Caco-2 (cell line): ENCODE measurements at regions of chr2 and their contacts with region 1.

Region 1: DNA sequence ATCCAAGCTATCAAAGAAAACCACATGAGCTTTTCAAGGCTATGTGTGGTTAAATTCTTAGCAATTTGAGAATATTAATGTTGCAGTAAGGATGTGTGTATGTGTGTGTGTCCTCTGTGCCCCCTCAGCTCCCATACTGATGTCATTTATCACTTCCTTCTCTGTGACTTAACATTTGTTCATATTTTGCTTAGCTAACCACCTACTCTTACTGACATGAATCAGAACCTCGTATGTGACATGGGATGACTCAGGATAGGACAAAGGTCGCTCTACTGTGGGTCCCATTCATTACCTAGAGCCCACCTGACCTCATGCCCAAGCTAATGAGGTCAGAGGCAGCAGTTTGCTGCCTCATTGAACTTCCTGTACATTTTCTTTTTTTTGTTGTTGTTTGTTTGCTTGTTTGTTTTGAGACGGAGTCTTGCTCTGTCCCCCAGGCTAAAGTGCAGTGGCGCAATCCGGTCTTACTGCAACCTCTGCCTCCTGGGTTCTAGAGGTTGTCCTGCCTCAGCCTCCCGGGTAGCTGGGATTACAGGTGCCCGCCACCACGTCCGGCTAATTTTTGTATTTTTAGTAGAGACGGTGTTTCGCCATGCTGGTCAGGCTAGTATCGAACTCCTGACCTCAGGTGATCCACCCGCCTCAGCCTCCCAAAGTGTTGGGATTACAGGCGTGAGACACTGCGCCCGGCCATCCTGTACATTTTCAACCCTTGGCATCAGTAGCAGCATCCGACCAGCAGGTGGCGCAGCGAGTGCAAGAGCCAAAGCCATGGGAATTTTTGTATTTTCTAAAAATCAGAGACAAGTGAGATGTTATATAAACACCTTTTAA is 36.4 kb downstream of the MOGAT1 start:
- DNase-seq: peak; percentile 84 to 90
- H3K4me3 ChIP-seq: no peak overlapping the region
- H3K4me3 Mint-ChIP-seq: peak overlapping the region; percentile 40
- H3K27ac Mint-ChIP-seq: peak overlapping the region; percentile 21
- H3K4me1 ChIP-seq: peaks cover 16% of the 10 kb centered on the region
- H3K4me1 Mint-ChIP-seq: peaks cover 17% of the 10 kb centered on the region
- H3K27me3 ChIP-seq: no peaks in the 10 kb centered on the region
- H3K27me3 Mint-ChIP-seq: no peaks in the 10 kb centered on the region
- CTCF ChIP-seq: peak; percentile 98 to 99

Region 2: DNA sequence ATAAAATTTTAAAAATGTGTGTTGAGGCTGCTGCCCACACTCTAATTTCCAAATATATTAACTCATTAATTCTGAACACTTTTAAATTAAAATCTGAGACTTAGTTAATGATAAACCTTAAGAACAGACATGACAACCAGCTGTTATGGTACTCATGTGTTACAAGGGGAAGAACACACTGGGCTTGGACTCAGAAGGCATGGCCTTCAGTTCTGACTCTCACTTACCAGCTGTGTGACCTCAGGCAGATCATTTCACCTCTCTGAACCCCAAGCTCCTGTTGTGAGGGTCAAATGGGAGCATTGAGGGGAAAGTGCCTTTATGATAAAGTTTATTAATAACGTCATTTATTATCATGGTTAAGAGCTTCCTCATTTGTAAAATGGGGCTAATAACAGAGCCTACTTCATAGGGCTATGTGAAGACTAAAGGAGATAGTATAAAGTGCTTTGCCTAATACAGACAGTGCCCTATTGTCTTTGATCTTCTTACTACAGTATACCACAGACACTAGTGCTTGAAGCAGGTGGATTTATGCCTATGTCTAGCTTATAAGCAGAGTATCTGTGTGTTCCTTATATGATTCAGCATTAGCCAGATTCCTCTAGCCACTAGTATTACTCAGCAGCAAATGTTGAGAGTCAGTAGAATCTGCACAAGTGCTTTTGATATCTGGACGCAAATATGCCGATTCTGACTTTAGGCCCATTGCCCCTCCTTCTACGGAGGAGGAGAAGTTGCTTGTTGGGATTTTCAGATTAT is 183.9 kb before region 1 on chr2:
- CTCF ChIA-PET with region 1: no interaction called
- POLR2A ChIA-PET with region 1: no interaction called
- intact Hi-C with region 1: no loop called
- DNase-seq: no peak
- H3K4me3 ChIP-seq: no peak overlapping the region
- H3K4me3 Mint-ChIP-seq: no peak overlapping the region
- H3K27ac Mint-ChIP-seq: no peak overlapping the region
- H3K4me1 ChIP-seq: no peaks in the 10 kb centered on the region
- H3K4me1 Mint-ChIP-seq: no peaks in the 10 kb centered on the region
- H3K27me3 ChIP-seq: no peaks in the 10 kb centered on the region
- H3K27me3 Mint-ChIP-seq: no peaks in the 10 kb centered on the region
- CTCF ChIP-seq: no peak

Region 3: GRCh38 chr2:222677981-222678380 is 29.9 kb before region 1 on chr2:
- CTCF ChIA-PET with region 1: no interaction called
- POLR2A ChIA-PET with region 1: no interaction called
- intact Hi-C with region 1: no loop called
- DNase-seq: no peak
- H3K4me3 ChIP-seq: no peak overlapping the region
- H3K4me3 Mint-ChIP-seq: no peak overlapping the region
- H3K27ac Mint-ChIP-seq: no peak overlapping the region
- H3K4me1 ChIP-seq: 0 out of 2 replicates have a peak, but pooled peaks cover 3% of the 10 kb centered on the region
- H3K4me1 Mint-ChIP-seq: no peaks in the 10 kb centered on the region
- H3K27me3 ChIP-seq: no peaks in the 10 kb centered on the region
- H3K27me3 Mint-ChIP-seq: peaks cover 7% of the 10 kb centered on the region
- CTCF ChIP-seq: peak in 1 of 2 experiments; percentile 18

Region 4: GRCh38 chr2:222690564-222691200 is 17.2 kb before region 1 on chr2:
- CTCF ChIA-PET with region 1: interaction called, 9 read pairs
- POLR2A ChIA-PET with region 1: no interaction called
- intact Hi-C with region 1: loop called (anchors 1 kb)
- DNase-seq: peak; percentile 82 to 89
- H3K4me3 ChIP-seq: no peak overlapping the region
- H3K4me3 Mint-ChIP-seq: no peak overlapping the region
- H3K27ac Mint-ChIP-seq: no peak overlapping the region
- H3K4me1 ChIP-seq: no peaks in the 10 kb centered on the region
- H3K4me1 Mint-ChIP-seq: no peaks in the 10 kb centered on the region
- H3K27me3 ChIP-seq: no peaks in the 10 kb centered on the region
- H3K27me3 Mint-ChIP-seq: no peaks in the 10 kb centered on the region
- CTCF ChIP-seq: peak; percentile 100

Region 5: GRCh38 chr2:222753251-222753824 is 45.4 kb after region 1 on chr2:
- CTCF ChIA-PET with region 1: interaction called, 3 read pairs
- POLR2A ChIA-PET with region 1: no interaction called
- intact Hi-C with region 1: loop called (anchors 1 kb)
- DNase-seq: no peak
- H3K4me3 ChIP-seq: no peak overlapping the region
- H3K4me3 Mint-ChIP-seq: no peak overlapping the region
- H3K27ac Mint-ChIP-seq: no peak overlapping the region
- H3K4me1 ChIP-seq: peaks cover 24% of the 10 kb centered on the region
- H3K4me1 Mint-ChIP-seq: peaks cover 26% of the 10 kb centered on the region
- H3K27me3 ChIP-seq: no peaks in the 10 kb centered on the region
- H3K27me3 Mint-ChIP-seq: no peaks in the 10 kb centered on the region
- CTCF ChIP-seq: no peak

Region 6: GRCh38 chr2:222805541-222806304 is 97.8 kb after region 1 on chr2:
- CTCF ChIA-PET with region 1: interaction called, 8 read pairs
- POLR2A ChIA-PET with region 1: interaction called, 4 read pairs
- intact Hi-C with region 1: loop called (anchors 1 kb)
- DNase-seq: peak in 1 of 2 experiments; percentile 56
- H3K4me3 ChIP-seq: no peak overlapping the region
- H3K4me3 Mint-ChIP-seq: no peak overlapping the region
- H3K27ac Mint-ChIP-seq: peak overlapping the region; percentile 86
- H3K4me1 ChIP-seq: peaks cover 23% of the 10 kb centered on the region
- H3K4me1 Mint-ChIP-seq: peaks cover 24% of the 10 kb centered on the region
- H3K27me3 ChIP-seq: no peaks in the 10 kb centered on the region
- H3K27me3 Mint-ChIP-seq: no peaks in the 10 kb centered on the region
- CTCF ChIP-seq: no peak

Region 7: GRCh38 chr2:222860740-222861410 is 153.0 kb after region 1 on chr2 and contains the start of gene ACSL3:
- CTCF ChIA-PET with region 1: interaction called, 30 read pairs
- POLR2A ChIA-PET with region 1: interaction called, 8 read pairs
- intact Hi-C with region 1: loop called (anchors 1 kb)
- DNase-seq: peak; percentile 98 to 100
- H3K4me3 ChIP-seq: peak within 1 kb of the TSS; percentile 99
- H3K4me3 Mint-ChIP-seq: no peak within 1 kb of the TSS
- H3K27ac Mint-ChIP-seq: peak within 1 kb of the TSS; percentile 78
- H3K4me1 ChIP-seq: peaks cover 50% of the 10 kb centered on the region
- H3K4me1 Mint-ChIP-seq: peaks cover 15% of the 10 kb centered on the region
- H3K27me3 ChIP-seq: no peaks in the 10 kb centered on the region; the same call in 1 of the 2 replicates
- H3K27me3 Mint-ChIP-seq: no peaks in the 10 kb centered on the region
- CTCF ChIP-seq: peak in 1 of 2 experiments; percentile 21
- total RNA-seq, gene ACSL3: 181 and 185 TPM in 2 replicates

Region 8: GRCh38 chr2:222903234-222904220 is 195.6 kb after region 1 on chr2:
- CTCF ChIA-PET with region 1: interaction called, 96 read pairs
- POLR2A ChIA-PET with region 1: interaction called, 3 read pairs
- intact Hi-C with region 1: loop called (anchors 1 kb)
- DNase-seq: peak; percentile 67 to 75
- H3K4me3 ChIP-seq: no peak overlapping the region
- H3K4me3 Mint-ChIP-seq: no peak overlapping the region
- H3K27ac Mint-ChIP-seq: no peak overlapping the region
- H3K4me1 ChIP-seq: peaks cover 44% of the 10 kb centered on the region
- H3K4me1 Mint-ChIP-seq: peaks cover 72% of the 10 kb centered on the region
- H3K27me3 ChIP-seq: no peaks in the 10 kb centered on the region
- H3K27me3 Mint-ChIP-seq: no peaks in the 10 kb centered on the region
- CTCF ChIP-seq: peak; percentile 86 to 87

Region 9: DNA sequence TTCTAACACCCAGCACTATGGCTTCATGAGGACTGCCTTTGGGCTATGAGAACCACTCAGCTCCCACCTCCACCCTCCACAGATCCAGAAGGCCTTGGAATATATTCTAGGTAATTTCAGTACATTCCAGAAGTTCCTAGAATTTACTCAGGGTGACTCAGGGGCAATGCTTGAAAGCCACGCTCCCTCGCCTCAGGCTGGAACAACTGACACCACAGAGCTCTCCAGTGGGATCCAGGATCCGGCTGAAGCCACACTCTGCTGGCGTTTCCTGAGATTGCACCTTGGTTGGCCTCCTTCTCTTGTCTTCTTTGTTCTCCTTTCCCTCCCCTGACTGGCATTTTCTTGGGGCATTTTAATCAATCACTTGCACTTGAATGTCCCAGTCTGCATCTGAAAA is 251.4 kb after region 1 on chr2:
- CTCF ChIA-PET with region 1: interaction called, 3 read pairs
- POLR2A ChIA-PET with region 1: no interaction called
- intact Hi-C with region 1: loop called (anchors 1 kb)
- DNase-seq: peak; percentile 81 to 90
- H3K4me3 ChIP-seq: no peak overlapping the region
- H3K4me3 Mint-ChIP-seq: no peak overlapping the region
- H3K27ac Mint-ChIP-seq: peak overlapping the region; percentile 49
- H3K4me1 ChIP-seq: peaks cover 25% of the 10 kb centered on the region
- H3K4me1 Mint-ChIP-seq: peaks cover 20% of the 10 kb centered on the region
- H3K27me3 ChIP-seq: no peaks in the 10 kb centered on the region
- H3K27me3 Mint-ChIP-seq: no peaks in the 10 kb centered on the region
- CTCF ChIP-seq: peak; percentile 38 to 44